ENCODE measurements at regions of chr1 and their contacts with region 1.

Region 1: DNA sequence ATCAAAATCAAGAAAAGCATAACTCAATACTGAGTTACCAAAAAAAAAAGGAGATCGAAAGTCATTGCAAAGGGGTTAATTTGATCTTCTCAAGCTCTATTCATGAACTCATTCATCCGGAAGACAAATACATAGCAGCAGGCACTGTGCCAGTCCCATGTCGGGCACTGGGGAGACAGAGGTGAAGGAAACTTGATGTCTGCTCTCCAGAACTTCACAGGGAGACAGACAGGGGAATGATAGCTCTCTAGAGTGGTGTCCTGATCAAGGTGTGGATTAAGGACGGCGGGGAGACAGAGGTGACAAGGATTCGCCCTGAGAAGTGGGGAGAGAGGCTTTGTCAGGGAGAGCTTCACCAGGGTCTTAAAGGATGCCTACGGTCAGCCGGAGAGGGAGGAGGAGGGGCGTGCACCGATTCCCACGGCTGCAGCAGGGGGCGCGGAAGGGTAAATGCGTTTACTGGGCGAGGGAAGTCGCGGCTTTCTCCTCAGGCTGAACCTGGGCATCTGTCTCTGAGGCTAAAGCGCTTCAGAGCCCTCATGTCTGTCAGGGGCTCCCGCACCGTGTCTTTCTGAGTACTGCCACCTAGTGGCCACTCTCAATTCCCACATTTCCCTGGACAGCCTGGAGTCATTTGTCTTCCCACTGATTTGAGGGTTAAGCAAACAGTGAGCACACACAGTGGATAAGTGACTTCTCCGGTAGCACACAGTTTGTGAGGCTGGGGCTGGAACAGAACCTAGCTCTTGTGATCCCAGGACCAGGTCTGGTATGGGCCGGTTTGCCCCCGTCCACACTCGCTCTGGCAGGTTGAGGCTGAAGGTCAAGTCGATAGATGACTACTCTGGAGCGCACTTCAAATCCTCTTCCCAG is 152.8 kb downstream of the TENT5C start:
- DNase-seq: peak; percentile 51
- H3K4me3 Mint-ChIP-seq: peak overlapping the region; percentile 68
- H3K27ac Mint-ChIP-seq: no peak overlapping the region
- H3K4me1 Mint-ChIP-seq: peaks cover 13% of the 10 kb centered on the region
- H3K27me3 Mint-ChIP-seq: peaks cover 45% of the 10 kb centered on the region

Region 2: DNA sequence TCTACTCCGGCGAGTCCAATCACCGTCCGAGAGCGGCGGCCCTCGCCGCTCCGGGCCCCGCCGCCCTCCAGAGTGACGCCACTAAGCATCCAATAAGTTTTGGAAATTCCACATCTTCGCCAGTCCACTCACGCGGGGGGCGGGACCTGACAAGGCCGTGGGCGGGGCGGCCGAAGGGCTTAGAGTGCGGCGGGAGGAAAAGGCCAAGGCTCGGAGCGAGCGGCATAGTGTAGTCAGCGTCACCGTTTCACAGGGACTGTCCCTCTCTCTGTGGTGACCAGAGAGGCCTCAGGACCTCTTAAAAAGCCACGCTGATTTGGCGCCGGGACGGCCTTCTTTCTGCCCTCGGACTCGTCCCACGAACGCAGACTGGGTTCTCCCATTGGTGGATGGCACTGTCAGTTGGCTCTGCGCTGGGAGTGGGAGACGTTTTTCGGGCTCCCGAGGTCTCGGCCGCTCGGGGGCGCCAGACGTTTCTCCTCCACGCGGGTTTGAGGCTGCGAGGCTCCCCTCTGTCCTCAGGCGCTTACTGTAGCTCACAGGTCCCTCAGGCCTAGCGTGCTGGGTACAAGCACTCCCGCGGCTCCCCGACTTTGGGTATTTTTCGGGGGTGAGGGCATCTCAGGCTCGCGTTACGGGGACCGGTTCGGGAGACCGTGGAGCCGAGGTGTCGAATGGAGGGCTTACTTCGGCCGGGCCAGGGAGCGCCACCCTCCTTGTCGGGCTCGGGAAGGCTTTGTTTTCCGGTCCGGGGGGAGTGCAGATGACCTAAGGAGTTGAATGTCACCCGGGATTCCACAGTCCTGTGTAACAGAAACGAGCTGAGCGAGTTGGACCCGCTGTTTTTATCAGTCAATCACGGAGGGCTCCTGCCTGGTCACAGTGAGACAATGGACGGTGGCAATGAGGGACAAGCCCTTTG is 636.6 kb before region 1 on chr1:
- intact Hi-C with region 1: loop called (anchors 10 kb)
- DNase-seq: peak; percentile 79
- H3K4me3 Mint-ChIP-seq: peak overlapping the region; percentile 84
- H3K27ac Mint-ChIP-seq: peak overlapping the region; percentile 46
- H3K4me1 Mint-ChIP-seq: peaks cover 7% of the 10 kb centered on the region
- H3K27me3 Mint-ChIP-seq: peaks cover 9% of the 10 kb centered on the region

Region 3: GRCh38 chr1:117367047-117368018 is 391.3 kb before region 1 on chr1 and contains the start of gene MAN1A2:
- intact Hi-C with region 1: loop called (anchors 10 kb)
- DNase-seq: peak; percentile 74
- H3K4me3 Mint-ChIP-seq: peak within 1 kb of the TSS; percentile 97
- H3K27ac Mint-ChIP-seq: peak within 1 kb of the TSS; percentile 88
- H3K4me1 Mint-ChIP-seq: peaks cover 60% of the 10 kb centered on the region
- H3K27me3 Mint-ChIP-seq: no peaks in the 10 kb centered on the region
- total RNA-seq, gene MAN1A2: 30.1 and 32.5 TPM in 2 replicates

Region 4: GRCh38 chr1:117512743-117513321 is 245.8 kb before region 1 on chr1:
- intact Hi-C with region 1: loop called (anchors 1 kb)
- DNase-seq: no peak
- H3K4me3 Mint-ChIP-seq: no peak overlapping the region
- H3K27ac Mint-ChIP-seq: no peak overlapping the region
- H3K4me1 Mint-ChIP-seq: peaks cover 6% of the 10 kb centered on the region
- H3K27me3 Mint-ChIP-seq: no peaks in the 10 kb centered on the region

Region 5: DNA sequence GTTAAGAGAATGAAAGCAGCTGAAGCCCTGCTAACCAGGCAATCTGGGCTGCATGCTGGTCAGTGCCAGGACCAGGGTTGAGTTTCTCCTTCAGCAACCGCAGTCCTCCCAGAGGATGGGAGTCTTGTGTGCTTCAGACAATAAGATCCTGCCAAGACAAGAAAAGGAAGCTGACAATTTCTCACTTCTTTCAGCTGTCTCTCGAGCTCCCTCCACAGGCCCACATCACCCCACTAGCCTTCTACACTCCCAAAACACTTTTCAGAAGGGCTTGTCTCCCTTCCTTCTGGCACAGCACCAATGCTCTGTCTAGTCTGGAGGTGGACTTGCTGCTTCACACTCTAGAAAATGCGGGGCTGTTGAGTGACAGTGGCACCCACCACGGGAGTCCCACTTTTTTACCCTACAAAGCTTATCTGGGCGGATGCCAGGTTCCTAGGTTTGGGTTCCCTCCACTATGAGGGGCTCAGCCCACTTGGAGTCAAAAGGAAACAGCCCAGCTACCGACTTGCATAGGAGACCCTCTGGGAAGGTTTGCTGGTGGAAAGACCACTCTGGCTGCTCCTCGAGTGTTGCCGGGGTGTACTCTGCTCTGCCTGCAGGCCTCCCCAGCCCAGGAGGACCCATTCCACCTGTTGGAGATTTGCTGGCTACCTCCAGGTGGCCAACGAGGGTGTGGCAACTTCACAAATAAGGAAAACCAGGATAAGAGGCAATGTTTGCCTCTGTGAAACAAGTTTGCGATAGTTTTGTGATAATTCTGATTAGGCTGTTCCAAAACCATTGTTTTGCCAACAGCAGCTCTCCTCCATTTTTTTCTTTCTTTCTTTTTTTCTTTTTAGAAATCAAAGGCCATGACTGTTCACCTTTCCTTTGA is 83.9 kb before region 1 on chr1:
- intact Hi-C with region 1: loop called (anchors 2 kb)
- DNase-seq: peak; percentile 42
- H3K4me3 Mint-ChIP-seq: no peak overlapping the region
- H3K27ac Mint-ChIP-seq: no peak overlapping the region
- H3K4me1 Mint-ChIP-seq: peaks cover 18% of the 10 kb centered on the region
- H3K27me3 Mint-ChIP-seq: peaks cover 18% of the 10 kb centered on the region

Region 6: GRCh38 chr1:117689997-117690625 is 68.6 kb before region 1 on chr1:
- intact Hi-C with region 1: loop called (anchors 5 kb)
- DNase-seq: no peak
- H3K4me3 Mint-ChIP-seq: no peak overlapping the region
- H3K27ac Mint-ChIP-seq: no peak overlapping the region
- H3K4me1 Mint-ChIP-seq: peaks cover 7% of the 10 kb centered on the region
- H3K27me3 Mint-ChIP-seq: peaks cover 21% of the 10 kb centered on the region

Region 7: GRCh38 chr1:117895482-117896114 is 136.9 kb after region 1 on chr1:
- intact Hi-C with region 1: loop called (anchors 1 kb)
- DNase-seq: peak; percentile 32
- H3K4me3 Mint-ChIP-seq: no peak overlapping the region
- H3K27ac Mint-ChIP-seq: no peak overlapping the region
- H3K4me1 Mint-ChIP-seq: peaks cover 7% of the 10 kb centered on the region
- H3K27me3 Mint-ChIP-seq: no peaks in the 10 kb centered on the region

Measured in activated T-helper 1 cell treated with anti-CD3 and anti-CD28 coated beads, Interleukin-12 subunit alpha, Interleukin-12 subunit beta, Interleukin-2, Interleukin-4 antibody, amounts not matched to agents 30 ng/mL and 10 ng/mL and 1 ng/mL, durations not matched to agents 14 hours and 24 hours and 36 hours (primary cell).